Thyroid gland (tissue), 4 donors: ENCODE measurements at regions of chr9 and their contacts with region 1.

Region 1: GRCh38 chr9:137762414-137763061 is 115.0 kb upstream of the CACNA1B start:
- DNase-seq: peak; percentile 33 to 41
- H3K4me3 ChIP-seq: no peak overlapping the region
- H3K27ac ChIP-seq: peak overlapping the region in 2 of 3 donors; percentile 42 to 65
- H3K4me1 ChIP-seq: peaks cover 14 to 39% of the 10 kb centered on the region in 2 donors
- H3K27me3 ChIP-seq: no peaks in the 10 kb centered on the region
- CTCF ChIP-seq: no peak
- POLR2A ChIP-seq: no peak

Region 2: DNA sequence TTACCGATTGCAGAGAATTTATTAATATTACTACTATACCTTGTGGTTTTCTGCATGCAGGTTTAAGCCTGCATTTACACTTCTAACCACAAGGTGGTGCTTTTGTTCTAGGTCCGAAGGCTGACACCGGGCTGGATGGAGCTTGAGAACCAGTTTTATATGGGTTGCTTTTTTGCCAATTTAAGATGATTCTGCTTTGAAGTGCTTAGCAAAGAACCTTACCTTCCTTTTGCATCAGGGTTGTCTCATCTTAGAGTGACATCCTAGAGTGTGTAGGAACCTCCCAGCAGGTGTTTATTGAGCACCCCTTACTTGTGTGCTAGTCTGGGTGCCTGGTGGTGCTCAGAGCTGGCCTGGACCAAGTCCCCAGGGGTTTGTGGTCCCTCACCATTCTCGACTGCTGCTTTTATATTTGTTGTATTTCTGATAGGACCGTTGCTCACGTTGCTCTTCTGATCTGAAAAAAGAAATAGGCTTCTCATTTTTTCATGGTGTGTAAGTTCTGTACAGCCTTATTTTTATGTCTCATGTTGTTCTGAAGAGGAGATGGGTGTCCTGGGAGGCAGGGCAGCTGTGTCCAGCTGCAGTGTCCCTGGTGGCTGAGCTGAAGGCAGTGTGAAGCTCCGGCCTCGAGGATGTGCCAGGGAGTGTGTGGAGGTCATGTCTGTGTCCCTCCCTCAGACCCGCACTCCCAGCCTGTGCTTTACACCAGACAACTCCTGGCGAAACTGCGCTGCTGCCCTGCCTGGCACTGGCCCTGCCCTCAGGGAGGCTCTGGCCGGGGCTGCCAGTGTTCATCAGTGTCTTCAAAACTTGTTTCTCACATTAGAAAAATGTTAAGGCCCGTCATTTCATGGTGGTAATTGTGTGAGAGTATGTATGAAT is 89.4 kb before region 1 on chr9:
- intact Hi-C with region 1: loop called (anchors 10 kb)
- DNase-seq: peak; percentile 50 to 52
- H3K4me3 ChIP-seq: no peak overlapping the region
- H3K27ac ChIP-seq: peak overlapping the region in 1 of 3 donors; percentile 45
- H3K4me1 ChIP-seq: peaks cover 31 to 34% of the 10 kb centered on the region in 2 donors
- H3K27me3 ChIP-seq: no peaks in the 10 kb centered on the region
- CTCF ChIP-seq: peak; percentile 74 to 85 (median 79)
- POLR2A ChIP-seq: no peak